GM13977 (cell line): ENCODE measurements at regions of chr14 and their contacts with region 1.

Region 1: GRCh38 chr14:65269732-65270131 is 142.8 kb upstream of the FUT8 start:
- DNase-seq: no peak
- CTCF ChIP-seq: no peak

Region 2: GRCh38 chr14:65239143-65239937 is 30.4 kb before region 1 on chr14:
- in situ Hi-C with region 1: loop called (anchors 5 kb)
- DNase-seq: no peak
- CTCF ChIP-seq: no peak